ENCODE measurements at regions of chr1 and their contacts with region 1.

Region 1: GRCh38 chr1:25624156-25624555 is 7.6 kb downstream of the MAN1C1 start:
- DNase-seq: no peak
- H3K4me3 ChIP-seq: no peak overlapping the region
- H3K27ac ChIP-seq: no peak overlapping the region
- H3K4me1 ChIP-seq: peaks cover 0 to 41% (median 32%) of the 10 kb centered on the region in 4 donors
- H3K27me3 ChIP-seq: no peaks in the 10 kb centered on the region
- CTCF ChIP-seq: no peak
- EP300 ChIP-seq: no peak
- POLR2A ChIP-seq: no peak

Region 2: DNA sequence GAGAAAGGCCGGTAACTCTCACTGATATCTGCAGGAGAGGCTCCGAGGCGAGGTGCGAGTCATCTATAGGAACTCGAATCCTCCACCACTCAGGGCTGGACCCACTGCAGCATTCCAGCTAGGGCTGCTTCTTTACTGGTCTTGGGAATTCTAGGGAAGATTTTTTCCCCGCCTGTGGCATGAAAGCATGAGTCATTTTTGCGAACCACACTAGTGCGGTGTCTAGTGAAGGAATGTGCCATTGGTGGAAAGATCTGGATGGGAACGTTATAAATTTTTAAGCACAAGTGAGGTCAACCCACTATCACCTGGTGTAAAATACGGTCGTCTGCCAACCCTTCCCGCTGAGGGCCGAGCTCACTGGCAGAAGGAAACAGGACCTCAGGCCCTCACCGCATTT is 441.5 kb before region 1 on chr1:
- intact Hi-C with region 1: no loop called
- DNase-seq: no peak
- H3K4me3 ChIP-seq: no peak overlapping the region
- H3K27ac ChIP-seq: no peak overlapping the region
- H3K4me1 ChIP-seq: no peaks in the 10 kb centered on the region
- H3K27me3 ChIP-seq: peaks cover 0 to 23% (median 0%) of the 10 kb centered on the region in 3 donors
- CTCF ChIP-seq: no peak
- EP300 ChIP-seq: no peak
- POLR2A ChIP-seq: no peak

Region 3: DNA sequence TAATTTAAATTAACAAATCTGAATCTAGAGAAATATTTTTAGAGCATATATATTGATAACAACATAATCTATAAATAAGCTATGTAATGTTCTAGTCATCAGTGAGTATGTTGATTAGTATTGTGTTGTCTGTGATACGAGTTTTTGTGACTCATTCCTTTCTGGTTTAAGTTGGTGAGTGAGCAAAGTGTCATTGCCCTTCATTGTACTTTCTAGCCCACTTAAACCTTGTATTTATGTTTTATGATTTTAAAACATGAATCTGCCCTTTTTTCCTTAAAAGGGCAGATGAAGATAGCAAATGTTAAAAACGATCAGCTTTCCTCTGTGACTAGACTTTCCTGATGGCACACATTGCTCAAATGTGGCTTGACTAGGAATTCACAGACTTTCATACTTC is 155.0 kb before region 1 on chr1:
- intact Hi-C with region 1: no loop called
- DNase-seq: no peak
- H3K4me3 ChIP-seq: no peak overlapping the region
- H3K27ac ChIP-seq: no peak overlapping the region
- H3K4me1 ChIP-seq: peaks cover 0 to 53% (median 33%) of the 10 kb centered on the region in 4 donors
- H3K27me3 ChIP-seq: no peaks in the 10 kb centered on the region
- CTCF ChIP-seq: no peak
- EP300 ChIP-seq: no peak
- POLR2A ChIP-seq: no peak

Region 4: DNA sequence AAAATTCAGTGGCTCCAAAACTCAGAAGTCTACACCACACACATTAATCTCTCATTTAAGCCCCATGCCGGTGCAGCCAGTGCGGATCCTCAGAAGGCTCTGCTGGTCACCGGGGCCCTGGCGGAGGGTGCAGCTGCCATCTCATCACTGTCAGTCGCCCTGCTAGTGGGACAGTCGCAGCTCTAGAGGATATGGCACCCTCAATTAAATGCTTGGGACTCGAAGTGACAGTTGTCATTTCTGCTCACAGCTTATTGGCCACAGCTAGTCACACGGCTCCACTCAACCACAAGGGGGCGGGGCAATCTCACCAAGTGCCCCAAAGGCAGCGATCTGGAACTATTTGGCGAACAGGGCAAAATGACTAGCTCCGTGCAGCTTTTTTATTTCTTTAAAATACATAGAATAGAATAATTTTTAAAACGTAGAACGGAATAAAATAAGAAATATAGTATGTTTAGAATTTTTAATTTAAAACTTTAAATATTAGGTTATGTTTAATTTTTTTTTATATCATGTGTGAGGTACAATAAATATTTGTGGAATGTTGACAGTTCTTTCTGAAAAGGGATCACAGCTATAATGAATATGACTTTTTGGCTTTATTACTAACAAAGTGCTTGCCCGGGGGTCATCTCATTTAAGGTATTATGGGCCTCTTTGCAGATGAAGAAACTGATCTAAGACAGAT is 15.5 kb before region 1 on chr1:
- intact Hi-C with region 1: no loop called
- DNase-seq: peak; percentile 93
- H3K4me3 ChIP-seq: no peak overlapping the region
- H3K27ac ChIP-seq: peak overlapping the region in 1 of 4 donors; percentile 71
- H3K4me1 ChIP-seq: peaks cover 0 to 29% (median 18%) of the 10 kb centered on the region in 4 donors
- H3K27me3 ChIP-seq: no peaks in the 10 kb centered on the region
- CTCF ChIP-seq: peak; percentile 81 to 91 (median 82)
- EP300 ChIP-seq: no peak
- POLR2A ChIP-seq: no peak

Region 5: DNA sequence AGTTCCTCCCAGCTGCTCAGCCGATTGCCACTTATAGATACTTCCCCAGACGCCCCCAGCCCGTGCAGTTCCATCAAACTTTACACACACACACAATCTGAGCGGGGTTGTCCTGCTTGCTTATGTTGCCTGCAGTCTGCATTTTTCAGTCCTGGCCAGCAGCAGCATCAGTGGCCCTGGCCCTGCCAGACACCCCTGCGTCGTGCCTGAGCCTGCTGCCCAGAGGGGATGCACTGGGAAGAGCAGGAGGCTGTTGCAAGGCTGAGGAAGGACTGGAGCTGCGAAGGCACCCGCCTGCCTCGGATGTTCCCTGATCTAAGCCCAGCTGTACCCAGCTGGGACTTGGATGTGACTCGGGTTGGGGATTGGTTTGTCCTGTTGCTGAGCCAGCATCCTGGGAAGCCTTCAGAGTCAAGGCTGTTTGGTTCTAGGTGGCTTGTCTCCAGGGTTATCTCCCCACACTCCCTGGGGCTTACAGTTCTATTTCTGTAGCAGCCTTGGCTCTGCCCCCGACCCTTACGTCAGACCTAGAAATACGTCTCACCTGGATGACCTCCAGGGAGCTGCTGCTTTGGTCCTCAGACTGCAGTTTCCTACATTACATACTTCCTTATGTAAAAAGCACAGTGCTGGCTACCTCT is 34.8 kb after region 1 on chr1:
- intact Hi-C with region 1: loop called (anchors 5 kb)
- DNase-seq: peak; percentile 92
- H3K4me3 ChIP-seq: no peak overlapping the region
- H3K27ac ChIP-seq: peak overlapping the region; percentile 52 to 73 (median 67)
- H3K4me1 ChIP-seq: peaks cover 0 to 23% (median 15%) of the 10 kb centered on the region in 4 donors
- H3K27me3 ChIP-seq: no peaks in the 10 kb centered on the region
- CTCF ChIP-seq: no peak
- EP300 ChIP-seq: no peak
- POLR2A ChIP-seq: no peak

Measured in sigmoid colon (tissue), 7 donors.